ENCODE measurements at regions of chr2 and their contacts with region 1.

Region 1: GRCh38 chr2:203029316-203029715 is 14.6 kb downstream of the NBEAL1 start:
- DNase-seq: no peak

Region 2: GRCh38 chr2:202950592-202950991 is 78.7 kb before region 1 on chr2:
- intact Hi-C with region 1: loop called in 1 of 2 experiments (anchors 2 kb)
- DNase-seq: no peak

Measured in posterior vena cava (tissue), 2 donors.